ENCODE measurements at regions of chr5 and their contacts with region 1.

Region 1: GRCh38 chr5:135493406-135494180 is 41.4 kb upstream of the TIFAB start:
- DNase-seq: no peak
- ATAC-seq: no peak
- H3K4me3 Mint-ChIP-seq: no peak overlapping the region
- H3K27ac Mint-ChIP-seq: no peak overlapping the region
- H3K4me1 Mint-ChIP-seq: peaks cover 4% of the 10 kb centered on the region
- H3K27me3 Mint-ChIP-seq: peaks cover 51% of the 10 kb centered on the region
- CTCF ChIP-seq: no peak

Region 2: GRCh38 chr5:135034236-135034962 is 459.2 kb before region 1 on chr5:
- CTCF ChIA-PET with region 1: no interaction called
- POLR2A ChIA-PET with region 1: no interaction called
- intact Hi-C with region 1: loop called (anchors 5 kb)
- DNase-seq: no peak
- ATAC-seq: peak; percentile 33
- H3K4me3 Mint-ChIP-seq: peak overlapping the region; percentile 85
- H3K27ac Mint-ChIP-seq: peak overlapping the region; percentile 53
- H3K4me1 Mint-ChIP-seq: peaks cover 42% of the 10 kb centered on the region
- H3K27me3 Mint-ChIP-seq: peaks cover 64% of the 10 kb centered on the region
- CTCF ChIP-seq: no peak

Region 3: GRCh38 chr5:135543485-135544304 is 50.1 kb after region 1 on chr5:
- CTCF ChIA-PET with region 1: no interaction called
- POLR2A ChIA-PET with region 1: no interaction called
- intact Hi-C with region 1: loop called (anchors 5 kb)
- DNase-seq: no peak
- ATAC-seq: no peak
- H3K4me3 Mint-ChIP-seq: peak overlapping the region; percentile 86
- H3K27ac Mint-ChIP-seq: no peak overlapping the region
- H3K4me1 Mint-ChIP-seq: peaks cover 15% of the 10 kb centered on the region
- H3K27me3 Mint-ChIP-seq: peaks cover 85% of the 10 kb centered on the region
- CTCF ChIP-seq: no peak

Measured in activated B cell treated with CpG ODN at 0.5 μM for 24 hours (primary cell).